Activated T-helper 2 cell treated with anti-CD3 and anti-CD28 coated beads, Interferon-gamma antibody, Interleukin-2, Interleukin-4, amounts not matched to agents 10 μg/mL and 5 μg/mL and 100 μg/mL, durations not matched to agents 14 hours and 24 hours and 36 hours (primary cell): ENCODE measurements at regions of chr11 and their contacts with region 1.

Region 1: GRCh38 chr11:72102946-72103753 is at the start of gene LAMTOR1:
- DNase-seq: peak; percentile 97
- H3K4me3 Mint-ChIP-seq: peak within 1 kb of the TSS; percentile 95
- H3K27ac Mint-ChIP-seq: peak within 1 kb of the TSS; percentile 96
- H3K4me1 Mint-ChIP-seq: peaks cover 32% of the 10 kb centered on the region
- H3K27me3 Mint-ChIP-seq: no peaks in the 10 kb centered on the region
- total RNA-seq, gene LAMTOR1: 95.1 and 100 TPM in 2 replicates

Region 2: DNA sequence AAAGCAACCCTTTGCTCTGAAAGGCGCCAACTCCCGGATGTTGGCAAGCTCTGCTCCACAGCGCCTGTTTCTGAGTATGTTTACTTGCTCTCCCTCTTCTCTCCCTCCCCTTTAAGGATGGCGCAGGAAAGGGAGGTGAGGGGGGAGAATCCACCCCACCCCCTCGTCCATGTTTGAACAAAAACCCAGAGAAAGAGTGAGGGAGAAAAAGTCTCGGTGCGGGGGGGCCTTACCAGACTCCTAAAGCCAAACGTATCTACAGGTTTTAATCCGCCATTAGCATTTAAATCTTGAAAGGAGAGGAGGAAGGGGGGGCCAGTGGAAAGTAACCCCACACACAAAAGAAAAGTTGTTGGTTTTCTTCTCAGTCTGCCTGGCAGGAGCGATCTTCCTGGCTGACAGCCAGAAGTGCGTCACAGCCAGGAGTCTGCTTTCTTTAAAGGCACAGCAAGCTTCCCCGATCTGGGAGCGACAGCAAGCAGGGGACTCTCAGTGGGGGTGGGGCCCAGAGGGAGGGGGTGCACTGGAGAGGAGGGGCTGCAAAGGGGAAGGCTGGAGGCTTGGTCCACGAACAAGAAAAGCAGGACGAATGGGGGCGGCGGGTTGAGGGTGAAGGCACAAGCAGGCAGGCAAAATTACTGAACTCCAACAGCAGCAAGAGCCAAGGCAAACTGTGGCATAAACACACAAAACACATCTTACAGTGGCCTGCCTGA is 62.3 kb before region 1 on chr11:
- intact Hi-C with region 1: loop called (anchors 2 kb)
- DNase-seq: peak; percentile 50
- H3K4me3 Mint-ChIP-seq: no peak overlapping the region
- H3K27ac Mint-ChIP-seq: no peak overlapping the region
- H3K4me1 Mint-ChIP-seq: peaks cover 31% of the 10 kb centered on the region
- H3K27me3 Mint-ChIP-seq: no peaks in the 10 kb centered on the region

Region 3: DNA sequence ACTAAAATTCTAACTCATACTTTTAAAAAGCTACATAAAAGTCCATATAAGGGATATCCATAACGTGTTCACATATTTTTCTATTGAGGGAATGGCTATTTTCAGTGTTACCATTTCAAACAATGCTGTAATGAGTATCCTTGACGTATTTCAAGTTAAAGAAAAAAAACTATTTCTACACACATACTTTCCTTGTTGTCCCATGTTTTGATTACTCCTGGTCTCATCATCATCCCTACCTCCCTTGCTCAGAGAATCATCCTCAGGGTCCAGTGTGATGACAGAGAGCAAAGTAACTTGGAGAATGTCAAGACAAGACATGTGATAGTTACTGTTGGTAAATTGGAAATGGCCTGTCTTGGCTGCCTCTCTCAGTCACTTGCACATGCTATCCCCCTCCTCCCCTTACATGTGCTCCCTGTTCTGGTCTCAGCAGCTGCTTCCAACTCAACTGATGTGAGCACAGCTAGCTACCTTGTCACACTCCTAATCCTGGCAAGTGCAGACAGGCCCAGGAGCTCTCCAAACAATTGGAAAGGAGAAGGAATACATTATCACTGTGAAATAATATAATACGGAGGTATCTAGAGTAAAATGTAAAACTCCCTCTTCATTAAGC is 44.6 kb before region 1 on chr11:
- intact Hi-C with region 1: no loop called
- DNase-seq: no peak
- H3K4me3 Mint-ChIP-seq: no peak overlapping the region
- H3K27ac Mint-ChIP-seq: no peak overlapping the region
- H3K4me1 Mint-ChIP-seq: no peaks in the 10 kb centered on the region
- H3K27me3 Mint-ChIP-seq: no peaks in the 10 kb centered on the region